Posterior cingulate gyrus (tissue), 11 donors: ENCODE measurements at regions of chr6 and their contacts with region 1.

Region 1: GRCh38 chr6:64330694-64331307 is 695.2 kb downstream of the PHF3 start:
- DNase-seq: peak; percentile 25 to 95 (median 73)

Region 2: GRCh38 chr6:63923139-63923739 is 407.6 kb before region 1 on chr6:
- intact Hi-C with region 1: loop called (anchors 2 kb)
- DNase-seq: no peak

Region 3: GRCh38 chr6:64012351-64013001 is 318.3 kb before region 1 on chr6:
- intact Hi-C with region 1: loop called (anchors 1 kb)
- DNase-seq: peak in 4 of 10 donors; percentile 27 to 83 (median 46)

Region 4: GRCh38 chr6:64482631-64483030 is 151.8 kb after region 1 on chr6:
- intact Hi-C with region 1: no loop called
- DNase-seq: no peak